WTC11 (cell line): ENCODE measurements at regions of chr12 and their contacts with region 1.

Region 1: DNA sequence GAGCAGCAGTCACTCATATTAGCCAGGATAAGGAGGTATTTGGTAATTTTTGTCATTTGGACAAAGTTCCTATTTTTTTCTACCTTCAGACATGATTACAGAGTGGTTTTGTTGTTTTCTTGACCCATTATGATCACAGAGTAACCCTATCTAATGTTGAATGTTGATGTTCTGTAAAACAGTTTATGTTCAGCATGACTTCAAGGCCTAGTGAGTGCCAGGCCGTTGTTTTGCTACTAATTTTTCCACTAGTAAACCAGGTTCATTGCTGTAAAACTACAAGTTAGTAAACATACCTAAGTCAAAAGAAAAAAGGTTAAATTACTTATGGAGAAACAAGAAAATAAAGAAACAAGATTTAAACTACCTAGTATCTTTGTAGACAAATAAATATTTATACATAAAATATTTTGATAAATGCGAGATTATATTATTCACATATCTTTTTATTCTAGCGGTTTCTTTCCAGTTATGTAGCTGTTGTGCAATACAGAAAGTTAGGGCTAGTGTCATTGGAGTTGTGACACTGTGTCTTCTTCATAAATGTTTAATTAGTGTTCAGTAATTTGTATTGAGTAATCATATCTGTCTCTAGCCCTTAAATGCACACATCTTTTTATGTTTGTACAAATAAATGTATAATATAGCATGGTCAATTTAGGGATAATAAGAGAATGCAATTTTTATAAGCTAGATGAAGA is 16.5 kb downstream of the ETNK1 start:
- DNase-seq: no peak
- ATAC-seq: no peak
- H3K4me3 Mint-ChIP-seq: no peak overlapping the region
- H3K27ac Mint-ChIP-seq: no peak overlapping the region
- H3K4me1 Mint-ChIP-seq: peaks cover 24% of the 10 kb centered on the region
- H3K27me3 Mint-ChIP-seq: no peaks in the 10 kb centered on the region
- CTCF ChIP-seq: no peak

Region 2: GRCh38 chr12:22529281-22530060 is 112.0 kb before region 1 on chr12:
- CTCF ChIA-PET with region 1: interaction called, 10 read pairs
- POLR2A ChIA-PET with region 1: no interaction called
- DNase-seq: no peak
- ATAC-seq: peak; percentile 69
- H3K4me3 Mint-ChIP-seq: no peak overlapping the region
- H3K27ac Mint-ChIP-seq: no peak overlapping the region
- H3K4me1 Mint-ChIP-seq: no peaks in the 10 kb centered on the region
- H3K27me3 Mint-ChIP-seq: no peaks in the 10 kb centered on the region
- CTCF ChIP-seq: peak; percentile 32; the same call in 1 of the 2 replicates

Region 3: DNA sequence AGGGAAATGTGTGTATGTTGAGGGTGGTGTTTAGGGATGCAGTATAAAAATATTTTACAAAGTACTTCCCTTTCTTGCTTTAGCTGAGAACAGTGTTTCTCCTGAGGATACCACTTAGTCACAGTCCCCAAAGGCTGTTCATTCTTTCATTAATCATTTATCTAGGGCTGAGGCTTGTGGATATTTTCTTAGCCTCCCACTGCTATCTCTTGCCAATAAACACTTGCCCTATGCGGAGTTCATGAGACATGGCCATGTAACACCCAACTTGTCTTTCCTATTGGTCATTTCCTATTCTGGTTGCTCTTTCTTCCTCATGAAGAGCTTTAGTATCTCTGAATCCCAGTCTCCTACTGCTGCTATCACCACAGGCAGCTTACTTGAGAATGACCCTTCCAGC is 58.6 kb after region 1 on chr12:
- CTCF ChIA-PET with region 1: no interaction called
- POLR2A ChIA-PET with region 1: no interaction called
- DNase-seq: no peak
- ATAC-seq: no peak
- H3K4me3 Mint-ChIP-seq: peak overlapping the region; percentile 37
- H3K27ac Mint-ChIP-seq: peak overlapping the region; percentile 95
- H3K4me1 Mint-ChIP-seq: peaks cover 46% of the 10 kb centered on the region
- H3K27me3 Mint-ChIP-seq: no peaks in the 10 kb centered on the region
- CTCF ChIP-seq: no peak